Mammary epithelial cell (primary cell): ENCODE measurements at regions of chr11 and their contacts with region 1.

Region 1: GRCh38 chr11:76207642-76208401 is 1.5 kb upstream of the WNT11 start:
- DNase-seq: peak; percentile 68
- H3K4me3 ChIP-seq: peak overlapping the region; percentile 30 to 48 (median 35)
- H3K27ac ChIP-seq: no peak overlapping the region
- H3K4me1 ChIP-seq: peaks cover 40% of the 10 kb centered on the region
- H3K27me3 ChIP-seq: peaks cover 37% of the 10 kb centered on the region
- CTCF ChIP-seq: peak; percentile 83 to 95

Region 2: DNA sequence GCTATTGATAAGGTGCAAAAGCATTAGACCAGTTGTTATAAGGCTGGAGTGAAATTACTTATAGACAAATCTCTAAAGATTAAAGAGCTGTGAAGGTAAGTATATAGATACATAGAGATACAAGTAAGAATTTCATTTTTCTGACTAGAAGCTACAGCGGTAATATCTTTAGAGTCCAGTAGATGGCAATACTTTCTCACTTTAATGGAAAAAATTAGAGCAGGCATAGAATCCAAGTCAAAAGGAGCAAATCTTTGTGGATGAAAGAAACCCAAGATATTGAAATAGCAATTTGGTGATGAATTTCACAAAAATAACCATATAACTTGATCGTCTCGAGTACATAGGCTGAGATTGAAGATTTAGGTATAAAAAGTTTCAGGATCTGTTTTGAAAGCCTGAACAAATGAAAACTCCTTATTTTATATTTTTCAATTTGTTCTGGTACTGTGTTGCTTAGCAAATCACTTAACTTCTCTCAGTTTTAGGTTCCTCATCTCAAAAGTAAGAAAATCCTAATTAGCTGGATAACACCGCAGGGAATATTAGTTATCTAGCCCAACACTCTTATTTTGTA is 310.9 kb before region 1 on chr11:
- CTCF ChIA-PET with region 1: interaction called, 9 read pairs
- dilution Hi-C with region 1: no loop called
- in situ Hi-C with region 1: no loop called
- intact Hi-C with region 1: loop called (anchors 2 kb)
- DNase-seq: peak; percentile 35
- H3K4me3 ChIP-seq: no peak overlapping the region
- H3K27ac ChIP-seq: no peak overlapping the region
- H3K4me1 ChIP-seq: no peaks in the 10 kb centered on the region
- H3K27me3 ChIP-seq: no peaks in the 10 kb centered on the region
- CTCF ChIP-seq: peak; percentile 59 to 60

Region 3: DNA sequence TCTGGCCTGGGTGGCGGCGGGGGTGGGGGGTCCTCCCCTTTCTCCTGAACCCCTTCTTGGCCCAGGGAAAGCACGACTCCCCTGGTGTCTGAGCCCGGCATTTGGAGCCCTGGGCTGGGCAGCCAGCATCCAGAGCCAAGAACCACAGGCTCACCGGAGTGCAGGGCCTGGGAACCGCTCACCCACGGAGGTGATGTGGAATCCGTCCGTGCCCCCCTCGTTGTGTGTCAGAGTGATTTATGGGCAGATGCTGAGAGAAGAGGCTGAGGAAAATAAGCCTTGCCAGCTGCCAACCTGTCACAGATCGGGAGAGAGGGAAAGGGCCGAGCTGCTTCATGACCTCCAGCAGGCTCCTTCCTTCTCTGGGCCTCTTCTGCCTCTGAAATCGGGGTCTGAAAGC is 35.2 kb before region 1 on chr11:
- CTCF ChIA-PET with region 1: no interaction called
- dilution Hi-C with region 1: no loop called
- in situ Hi-C with region 1: no loop called
- intact Hi-C with region 1: no loop called
- DNase-seq: no peak
- H3K4me3 ChIP-seq: no peak overlapping the region
- H3K27ac ChIP-seq: no peak overlapping the region
- H3K4me1 ChIP-seq: no peaks in the 10 kb centered on the region
- H3K27me3 ChIP-seq: peaks cover 3% of the 10 kb centered on the region
- CTCF ChIP-seq: no peak

Region 4: DNA sequence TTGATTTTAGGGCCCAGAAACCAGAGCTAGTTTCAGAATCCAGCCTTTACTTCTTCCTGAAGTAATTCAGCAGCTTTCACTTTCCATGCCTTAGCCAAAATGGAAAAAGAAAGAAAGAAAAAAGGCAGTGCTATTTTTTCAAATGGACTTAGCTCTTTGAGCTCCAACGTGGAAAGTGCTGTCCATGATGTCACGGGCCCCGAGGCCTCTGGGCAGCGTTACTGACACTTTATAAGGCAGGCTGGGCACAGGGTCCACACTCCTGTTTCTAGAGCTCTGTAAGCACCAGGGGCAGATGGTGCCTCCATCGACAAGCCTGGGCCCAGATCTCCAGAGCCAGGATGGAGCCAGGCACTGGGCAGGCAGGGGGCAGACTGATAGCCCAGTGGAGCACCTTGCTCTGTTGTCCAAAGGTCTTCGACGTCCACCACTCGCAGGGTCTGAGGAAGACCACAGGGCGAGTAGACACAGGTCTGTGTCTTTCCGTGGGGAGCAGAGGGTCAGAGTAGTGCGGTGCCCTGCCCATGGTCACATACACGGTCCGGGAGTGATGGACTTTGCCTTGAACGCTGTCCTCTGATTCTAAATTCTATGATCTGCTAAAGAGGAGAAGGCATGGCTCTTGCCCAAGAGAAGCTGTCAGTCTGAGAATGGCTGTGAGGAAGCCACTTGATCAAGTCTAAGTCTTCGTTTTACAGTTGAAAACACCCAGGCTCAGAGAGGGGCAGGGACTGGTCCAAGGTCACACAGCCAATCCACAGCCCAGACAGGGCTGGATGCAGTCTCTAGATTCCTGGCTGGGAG is 20.5 kb after region 1 on chr11:
- CTCF ChIA-PET with region 1: no interaction called
- dilution Hi-C with region 1: no loop called
- in situ Hi-C with region 1: no loop called
- intact Hi-C with region 1: no loop called
- DNase-seq: no peak
- H3K4me3 ChIP-seq: no peak overlapping the region
- H3K27ac ChIP-seq: no peak overlapping the region
- H3K4me1 ChIP-seq: no peaks in the 10 kb centered on the region
- H3K27me3 ChIP-seq: no peaks in the 10 kb centered on the region
- CTCF ChIP-seq: no peak

Region 5: DNA sequence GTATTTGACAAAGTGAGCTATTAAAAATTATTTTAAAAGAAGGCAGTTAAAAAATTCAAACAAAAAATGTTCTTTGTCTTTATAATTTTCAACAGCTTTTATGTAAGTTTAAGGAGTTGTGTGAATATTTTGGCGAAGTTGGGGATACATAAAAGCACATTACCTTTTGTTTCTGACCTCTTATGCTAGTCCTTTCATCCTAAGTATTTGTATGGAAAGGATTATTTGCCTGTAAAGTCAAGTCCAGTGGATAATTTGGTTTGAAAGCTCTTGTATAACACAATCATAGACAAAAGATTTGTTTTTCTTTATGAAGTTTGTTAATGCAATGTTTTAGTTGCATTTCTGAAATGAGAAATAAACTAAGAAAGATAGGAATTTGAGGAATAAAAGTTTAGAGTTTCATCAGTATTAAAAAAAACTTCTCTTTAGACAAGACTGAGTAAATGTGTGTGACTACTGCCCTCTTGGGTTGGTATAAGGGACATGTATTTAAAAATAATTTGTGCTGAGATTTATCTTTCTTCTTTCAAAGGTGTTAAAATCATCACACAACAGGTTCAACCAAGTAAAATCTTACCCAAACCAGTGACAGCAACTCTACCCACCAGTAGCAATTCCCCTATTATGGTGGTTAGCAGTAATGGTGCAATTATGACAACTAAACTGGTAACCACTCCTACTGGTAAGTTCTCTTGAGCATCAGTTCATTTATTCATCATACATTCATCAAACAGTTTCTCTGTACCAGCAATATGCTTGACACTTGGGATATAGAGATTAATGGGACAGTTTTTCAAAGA is 305.2 kb after region 1 on chr11:
- CTCF ChIA-PET with region 1: no interaction called
- dilution Hi-C with region 1: no loop called
- in situ Hi-C with region 1: no loop called
- intact Hi-C with region 1: loop called (anchors 1 kb)
- DNase-seq: peak; percentile 3
- H3K4me3 ChIP-seq: no peak overlapping the region
- H3K27ac ChIP-seq: no peak overlapping the region
- H3K4me1 ChIP-seq: no peaks in the 10 kb centered on the region
- H3K27me3 ChIP-seq: no peaks in the 10 kb centered on the region
- CTCF ChIP-seq: peak; percentile 27 to 44

Region 6: GRCh38 chr11:76918941-76919386 is 711.1 kb after region 1 on chr11:
- CTCF ChIA-PET with region 1: no interaction called
- dilution Hi-C with region 1: no loop called
- in situ Hi-C with region 1: no loop called
- intact Hi-C with region 1: no loop called
- DNase-seq: peak; percentile 40
- H3K4me3 ChIP-seq: peak overlapping the region in 1 of 3 experiments; percentile 7
- H3K27ac ChIP-seq: no peak overlapping the region
- H3K4me1 ChIP-seq: no peaks in the 10 kb centered on the region
- H3K27me3 ChIP-seq: no peaks in the 10 kb centered on the region
- CTCF ChIP-seq: peak; percentile 69 to 82